GM12878 (cell line): ENCODE measurements at regions of chr6 and their contacts with region 1.

Region 1: GRCh38 chr6:73732845-73733675 is 37.1 kb downstream of the CD109 start:
- DNase-seq: peak; percentile 31
- ATAC-seq: peak; percentile 90
- H3K4me3 ChIP-seq: no peak overlapping the region
- H3K27ac ChIP-seq: no peak overlapping the region
- H3K4me1 ChIP-seq: peaks cover 4% of the 10 kb centered on the region
- H3K27me3 ChIP-seq: no peaks in the 10 kb centered on the region
- CTCF ChIP-seq: peak; percentile 86 to 95 (median 92)
- EP300 ChIP-seq: no peak
- POLR2A ChIP-seq: no peak
- RAD21 ChIP-seq: peak; percentile 85

Region 2: DNA sequence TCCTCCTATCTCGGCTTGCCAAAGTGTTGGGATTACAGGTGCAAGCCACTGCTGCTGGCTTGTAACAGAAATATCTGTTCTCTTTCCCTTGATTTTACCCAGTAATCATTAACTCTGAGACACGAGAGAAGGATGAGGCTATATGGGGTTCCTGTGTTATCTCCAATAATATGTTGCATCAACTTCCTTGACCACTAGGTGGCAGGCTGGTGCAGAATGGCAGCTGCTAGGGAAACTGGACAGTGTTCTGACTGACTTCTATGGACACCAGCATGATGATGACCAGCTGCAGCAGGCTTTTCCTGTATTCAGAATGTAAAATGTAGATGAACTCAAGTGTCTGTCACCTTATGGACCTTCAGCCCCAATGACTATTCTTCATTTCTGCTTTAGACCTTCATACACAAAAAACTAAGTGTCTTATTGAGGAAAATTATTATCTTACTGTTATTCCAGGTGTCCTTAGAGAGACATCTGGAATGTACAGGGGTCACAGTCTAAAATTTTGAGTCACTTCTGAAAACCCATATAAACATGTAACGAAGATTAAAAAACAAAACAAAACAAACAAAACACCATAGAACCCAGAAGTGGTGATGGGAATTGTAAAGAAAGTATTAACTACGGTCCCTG is 57.5 kb before region 1 on chr6:
- CTCF ChIA-PET with region 1: interaction called, 213 read pairs
- POLR2A ChIA-PET with region 1: interaction called, 4 read pairs
- RAD21 ChIA-PET with region 1: interaction called, 63 read pairs
- SMC1A ChIA-PET with region 1: interaction called, 120 read pairs
- in situ Hi-C with region 1: loop called (anchors 5 kb)
- intact Hi-C with region 1: loop called (anchors 1 kb)
- DNase-seq: no peak
- ATAC-seq: peak; percentile 98
- H3K4me3 ChIP-seq: no peak overlapping the region
- H3K27ac ChIP-seq: no peak overlapping the region
- H3K4me1 ChIP-seq: no peaks in the 10 kb centered on the region
- H3K27me3 ChIP-seq: no peaks in the 10 kb centered on the region
- CTCF ChIP-seq: peak; percentile 86 to 94 (median 90)
- EP300 ChIP-seq: no peak
- POLR2A ChIP-seq: no peak
- RAD21 ChIP-seq: peak; percentile 92

Region 3: GRCh38 chr6:73695619-73696421 is 37.2 kb before region 1 on chr6 and contains the start of gene CD109:
- CTCF ChIA-PET with region 1: interaction called, 11 read pairs
- POLR2A ChIA-PET with region 1: no interaction called
- RAD21 ChIA-PET with region 1: no interaction called
- SMC1A ChIA-PET with region 1: interaction called, 4 read pairs
- in situ Hi-C with region 1: no loop called
- intact Hi-C with region 1: no loop called
- DNase-seq: no peak
- ATAC-seq: peak; percentile 70
- H3K4me3 ChIP-seq: peak within 1 kb of the TSS; percentile 64
- H3K27ac ChIP-seq: no peak within 1 kb of the TSS
- H3K4me1 ChIP-seq: no peaks in the 10 kb centered on the region
- H3K27me3 ChIP-seq: no peaks in the 10 kb centered on the region; a peak in 1 of 4 replicates
- CTCF ChIP-seq: no peak
- EP300 ChIP-seq: no peak
- POLR2A ChIP-seq: no peak; the same call in 1 of the 2 replicates
- RAD21 ChIP-seq: no peak
- polyA plus RNA-seq, gene CD109: 1.0 to 1.5 TPM

Region 4: GRCh38 chr6:73713410-73714147 is 19.5 kb before region 1 on chr6:
- CTCF ChIA-PET with region 1: interaction called, 24 read pairs
- POLR2A ChIA-PET with region 1: no interaction called
- RAD21 ChIA-PET with region 1: interaction called, 5 read pairs
- SMC1A ChIA-PET with region 1: interaction called, 5 read pairs
- in situ Hi-C with region 1: no loop called
- intact Hi-C with region 1: no loop called
- DNase-seq: no peak
- ATAC-seq: no peak
- H3K4me3 ChIP-seq: no peak overlapping the region
- H3K27ac ChIP-seq: no peak overlapping the region
- H3K4me1 ChIP-seq: no peaks in the 10 kb centered on the region
- H3K27me3 ChIP-seq: no peaks in the 10 kb centered on the region
- CTCF ChIP-seq: no peak
- EP300 ChIP-seq: no peak
- POLR2A ChIP-seq: no peak
- RAD21 ChIP-seq: no peak

Region 5: DNA sequence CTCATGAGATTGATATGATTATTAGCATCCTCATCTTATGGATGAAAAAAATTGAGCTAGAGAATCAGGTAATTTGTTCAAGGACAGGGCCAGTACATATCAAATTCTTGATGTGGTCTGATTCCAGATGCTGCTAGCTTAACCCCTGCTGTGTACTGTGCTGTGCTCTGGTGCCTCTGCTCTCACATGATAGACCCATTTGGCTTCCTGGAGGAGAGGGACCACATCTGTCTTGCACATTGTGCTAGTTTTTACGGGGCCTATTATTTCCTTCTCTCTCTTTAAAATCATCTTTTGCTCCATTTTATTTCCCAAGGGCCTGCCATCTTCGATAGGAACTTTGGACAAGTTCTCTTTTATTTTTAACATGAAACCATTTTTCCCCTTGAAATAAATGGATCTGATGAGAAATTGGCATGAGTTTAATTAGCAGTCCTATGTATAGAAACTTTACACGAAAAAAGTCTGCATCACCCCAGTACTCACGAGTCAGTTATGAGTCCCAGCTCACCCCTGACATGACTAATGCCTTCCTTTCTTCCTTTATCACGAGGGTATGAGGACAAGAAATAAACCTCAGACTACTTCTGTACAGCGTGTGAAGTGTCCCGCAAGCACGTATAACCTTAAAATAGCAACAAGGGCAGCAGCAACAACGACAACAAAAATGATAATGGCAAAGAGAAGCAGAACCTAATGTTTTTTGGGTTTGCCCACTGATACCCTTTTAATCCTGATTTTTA is 10.6 kb before region 1 on chr6:
- CTCF ChIA-PET with region 1: interaction called, 23 read pairs
- POLR2A ChIA-PET with region 1: no interaction called
- RAD21 ChIA-PET with region 1: interaction called, 3 read pairs
- SMC1A ChIA-PET with region 1: interaction called, 4 read pairs
- in situ Hi-C with region 1: no loop called
- intact Hi-C with region 1: no loop called
- DNase-seq: peak; percentile 46
- ATAC-seq: peak; percentile 85
- H3K4me3 ChIP-seq: no peak overlapping the region
- H3K27ac ChIP-seq: no peak overlapping the region; the same call in 1 of the 2 replicates
- H3K4me1 ChIP-seq: peaks cover 3% of the 10 kb centered on the region
- H3K27me3 ChIP-seq: no peaks in the 10 kb centered on the region
- CTCF ChIP-seq: no peak
- EP300 ChIP-seq: peak; percentile 53 to 73; a peak in 3 of 4 replicates
- POLR2A ChIP-seq: no peak
- RAD21 ChIP-seq: no peak

Region 6: GRCh38 chr6:73747289-73747688 is 14.2 kb after region 1 on chr6:
- CTCF ChIA-PET with region 1: interaction called, 17 read pairs
- POLR2A ChIA-PET with region 1: no interaction called
- RAD21 ChIA-PET with region 1: interaction called, 6 read pairs
- SMC1A ChIA-PET with region 1: interaction called, 7 read pairs
- in situ Hi-C with region 1: no loop called
- intact Hi-C with region 1: no loop called
- DNase-seq: peak; percentile 51
- ATAC-seq: peak; percentile 96
- H3K4me3 ChIP-seq: no peak overlapping the region; the same call in 1 of the 2 replicates
- H3K27ac ChIP-seq: no peak overlapping the region
- H3K4me1 ChIP-seq: peaks cover 2% of the 10 kb centered on the region; the same call in 1 of the 2 replicates
- H3K27me3 ChIP-seq: no peaks in the 10 kb centered on the region
- CTCF ChIP-seq: no peak
- EP300 ChIP-seq: no peak
- POLR2A ChIP-seq: no peak
- RAD21 ChIP-seq: no peak

Region 7: GRCh38 chr6:73954881-73955280 is 221.8 kb after region 1 on chr6:
- CTCF ChIA-PET with region 1: no interaction called
- POLR2A ChIA-PET with region 1: no interaction called
- RAD21 ChIA-PET with region 1: no interaction called
- SMC1A ChIA-PET with region 1: no interaction called
- in situ Hi-C with region 1: no loop called
- intact Hi-C with region 1: no loop called
- DNase-seq: no peak
- ATAC-seq: no peak
- H3K4me3 ChIP-seq: no peak overlapping the region
- H3K27ac ChIP-seq: no peak overlapping the region
- H3K4me1 ChIP-seq: no peaks in the 10 kb centered on the region
- H3K27me3 ChIP-seq: no peaks in the 10 kb centered on the region
- CTCF ChIP-seq: no peak
- EP300 ChIP-seq: no peak
- POLR2A ChIP-seq: no peak
- RAD21 ChIP-seq: no peak

Region 8: DNA sequence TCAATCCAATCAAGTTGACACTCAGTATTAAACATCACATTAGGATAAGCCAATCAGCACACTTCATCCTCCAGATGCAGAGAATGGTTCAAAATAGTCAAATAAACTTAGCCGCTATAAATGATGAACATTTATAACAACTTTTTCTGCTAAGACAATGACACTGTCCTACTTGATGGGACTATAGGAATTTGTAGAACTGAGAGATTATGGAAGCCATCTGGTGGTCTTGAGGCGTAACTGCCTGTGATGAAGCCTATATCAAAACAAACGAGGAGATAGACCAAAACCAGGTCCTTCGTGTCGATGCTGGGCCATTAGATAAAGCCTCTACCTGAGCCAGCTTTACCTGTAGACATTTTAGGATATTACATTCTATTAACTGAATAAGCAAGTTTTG is 841.7 kb after region 1 on chr6:
- CTCF ChIA-PET with region 1: no interaction called
- POLR2A ChIA-PET with region 1: no interaction called
- RAD21 ChIA-PET with region 1: interaction called, 3 read pairs
- SMC1A ChIA-PET with region 1: interaction called, 3 read pairs
- in situ Hi-C with region 1: no loop called
- intact Hi-C with region 1: loop called (anchors 10 kb)
- DNase-seq: no peak
- ATAC-seq: peak; percentile 50
- H3K4me3 ChIP-seq: no peak overlapping the region
- H3K27ac ChIP-seq: no peak overlapping the region
- H3K4me1 ChIP-seq: peaks cover 12% of the 10 kb centered on the region
- H3K27me3 ChIP-seq: no peaks in the 10 kb centered on the region
- CTCF ChIP-seq: peak; percentile 41 to 52 (median 47); a peak in 5 of 6 replicates
- EP300 ChIP-seq: no peak
- POLR2A ChIP-seq: no peak
- RAD21 ChIP-seq: peak; percentile 57; the same call in 1 of the 2 replicates